Naive thymus-derived CD4-positive, alpha-beta T cell (primary cell): ENCODE measurements at regions of chr12 and their contacts with region 1.

Region 1: DNA sequence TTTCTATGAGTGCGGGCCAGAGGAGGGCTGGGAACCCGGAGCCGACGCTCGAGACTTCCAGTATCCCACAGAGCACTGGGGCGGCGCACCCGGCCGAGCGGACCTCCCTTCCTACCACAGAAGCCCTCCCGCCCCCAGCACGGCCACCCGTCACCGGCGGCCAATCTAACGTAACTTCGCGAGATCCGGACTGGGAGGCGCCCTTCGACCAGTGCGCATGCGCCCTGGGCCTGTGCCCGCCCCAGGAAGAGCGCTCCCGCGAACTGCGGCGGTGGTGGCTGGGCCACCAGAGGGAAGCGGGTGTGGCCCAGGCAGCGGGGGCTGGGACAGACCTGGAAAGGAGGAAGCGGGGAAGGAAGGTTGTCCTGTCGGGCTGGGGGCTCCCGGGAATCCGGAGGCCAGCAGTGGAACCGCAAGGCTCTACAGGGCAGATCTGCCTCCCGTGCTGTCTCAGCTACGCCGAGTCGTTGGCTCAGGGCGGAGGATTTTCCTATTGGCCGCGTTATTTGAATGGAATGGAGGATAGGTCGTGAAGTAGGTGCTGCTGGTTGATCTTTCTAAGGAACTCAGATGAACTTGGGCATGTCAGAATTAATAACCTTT is at the start of gene PPP1R12A:
- DNase-seq: peak; percentile 92 to 97 (median 94)
- ATAC-seq: peak; percentile 92
- H3K4me3 ChIP-seq: peak within 1 kb of the TSS; percentile 89
- H3K4me3 Mint-ChIP-seq: peak within 1 kb of the TSS; percentile 88 to 100 (median 94)
- H3K27ac ChIP-seq: peak within 1 kb of the TSS; percentile 85
- H3K27ac Mint-ChIP-seq: peak within 1 kb of the TSS; percentile 80 to 99 (median 93)
- H3K4me1 ChIP-seq: peaks cover 6 to 17% of the 10 kb centered on the region in 2 donors
- H3K4me1 Mint-ChIP-seq: peaks cover 34 to 53% (median 47%) of the 10 kb centered on the region in 7 donors
- H3K27me3 ChIP-seq: no peaks in the 10 kb centered on the region
- H3K27me3 Mint-ChIP-seq: peaks cover 0 to 2% (median 0%) of the 10 kb centered on the region in 5 donors
- total RNA-seq, gene PPP1R12A: 72.7 to 111 (median 103) TPM

Region 2: DNA sequence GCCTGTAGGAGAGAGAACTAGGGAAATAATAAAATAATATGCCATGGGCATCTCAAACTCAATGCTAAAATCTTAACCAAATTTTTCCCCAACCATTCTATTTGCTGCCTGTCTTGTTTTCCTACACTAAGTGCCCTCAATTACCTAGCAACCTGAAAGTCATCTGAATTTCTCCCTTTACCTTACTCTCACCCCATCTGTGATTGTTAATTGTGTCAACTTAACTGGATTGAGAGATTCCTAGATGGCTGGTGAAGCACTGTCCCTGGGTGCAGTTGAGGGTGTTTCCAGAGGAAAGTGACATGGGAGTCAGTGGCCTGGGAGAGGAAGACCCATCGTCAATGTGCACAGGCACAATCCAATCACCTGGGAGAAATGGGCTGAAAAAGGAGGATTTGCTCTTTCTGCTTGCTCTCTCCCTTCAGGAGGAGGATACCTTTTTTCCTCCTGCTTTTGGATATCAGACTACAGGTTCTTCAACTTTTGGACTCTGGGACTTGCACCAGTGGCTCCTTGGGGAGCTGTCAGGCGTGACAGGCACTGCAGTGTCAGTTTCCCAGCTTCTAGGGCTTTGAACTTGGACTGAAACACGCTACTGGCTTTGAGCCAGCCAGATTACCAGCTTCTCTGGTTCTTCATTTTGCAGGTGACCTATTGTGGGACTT is 100.3 kb before region 1 on chr12:
- CTCF ChIA-PET with region 1: no interaction called
- POLR2A ChIA-PET with region 1: no interaction called
- intact Hi-C with region 1: loop called in 1 of 2 experiments (anchors 5 kb)
- DNase-seq: no peak
- ATAC-seq: no peak
- H3K4me3 ChIP-seq: no peak overlapping the region
- H3K4me3 Mint-ChIP-seq: peak overlapping the region in 1 of 10 donors; percentile 16
- H3K27ac ChIP-seq: no peak overlapping the region
- H3K27ac Mint-ChIP-seq: peak overlapping the region in 4 of 9 donors; percentile 7 to 69 (median 40)
- H3K4me1 ChIP-seq: peaks cover 4 to 12% of the 10 kb centered on the region in 2 donors
- H3K4me1 Mint-ChIP-seq: peaks cover 28 to 80% (median 68%) of the 10 kb centered on the region in 7 donors
- H3K27me3 ChIP-seq: no peaks in the 10 kb centered on the region
- H3K27me3 Mint-ChIP-seq: no peaks in the 10 kb centered on the region

Region 3: GRCh38 chr12:80087486-80088213 is 152.5 kb after region 1 on chr12:
- CTCF ChIA-PET with region 1: no interaction called
- POLR2A ChIA-PET with region 1: interaction called, 4 read pairs
- intact Hi-C with region 1: loop called in 1 of 2 experiments (anchors 1 kb)
- DNase-seq: no peak
- ATAC-seq: no peak
- H3K4me3 ChIP-seq: no peak overlapping the region
- H3K4me3 Mint-ChIP-seq: no peak overlapping the region
- H3K27ac ChIP-seq: no peak overlapping the region
- H3K27ac Mint-ChIP-seq: no peak overlapping the region
- H3K4me1 ChIP-seq: peaks cover 5 to 15% of the 10 kb centered on the region in 2 donors
- H3K4me1 Mint-ChIP-seq: peaks cover 6 to 22% (median 19%) of the 10 kb centered on the region in 7 donors
- H3K27me3 ChIP-seq: no peaks in the 10 kb centered on the region
- H3K27me3 Mint-ChIP-seq: peaks cover 0 to 11% (median 0%) of the 10 kb centered on the region in 5 donors

Region 4: GRCh38 chr12:80099259-80099658 is 164.1 kb after region 1 on chr12 and contains the start of gene OTOGL:
- CTCF ChIA-PET with region 1: no interaction called
- POLR2A ChIA-PET with region 1: no interaction called
- intact Hi-C with region 1: loop called in 1 of 2 experiments (anchors 5 kb)
- DNase-seq: no peak
- ATAC-seq: no peak
- H3K4me3 ChIP-seq: no peak within 1 kb of the TSS
- H3K4me3 Mint-ChIP-seq: no peak within 1 kb of the TSS
- H3K27ac ChIP-seq: no peak within 1 kb of the TSS
- H3K27ac Mint-ChIP-seq: peak within 1 kb of the TSS in 1 of 9 donors; percentile 8
- H3K4me1 ChIP-seq: no peaks in the 10 kb centered on the region
- H3K4me1 Mint-ChIP-seq: peaks cover 0 to 3% (median 0%) of the 10 kb centered on the region in 7 donors
- H3K27me3 ChIP-seq: no peaks in the 10 kb centered on the region
- H3K27me3 Mint-ChIP-seq: peaks cover 0 to 4% (median 0%) of the 10 kb centered on the region in 5 donors
- total RNA-seq, gene OTOGL: not detected